T-cell (primary cell): ENCODE measurements at regions of chr14 and their contacts with region 1.

Region 1: DNA sequence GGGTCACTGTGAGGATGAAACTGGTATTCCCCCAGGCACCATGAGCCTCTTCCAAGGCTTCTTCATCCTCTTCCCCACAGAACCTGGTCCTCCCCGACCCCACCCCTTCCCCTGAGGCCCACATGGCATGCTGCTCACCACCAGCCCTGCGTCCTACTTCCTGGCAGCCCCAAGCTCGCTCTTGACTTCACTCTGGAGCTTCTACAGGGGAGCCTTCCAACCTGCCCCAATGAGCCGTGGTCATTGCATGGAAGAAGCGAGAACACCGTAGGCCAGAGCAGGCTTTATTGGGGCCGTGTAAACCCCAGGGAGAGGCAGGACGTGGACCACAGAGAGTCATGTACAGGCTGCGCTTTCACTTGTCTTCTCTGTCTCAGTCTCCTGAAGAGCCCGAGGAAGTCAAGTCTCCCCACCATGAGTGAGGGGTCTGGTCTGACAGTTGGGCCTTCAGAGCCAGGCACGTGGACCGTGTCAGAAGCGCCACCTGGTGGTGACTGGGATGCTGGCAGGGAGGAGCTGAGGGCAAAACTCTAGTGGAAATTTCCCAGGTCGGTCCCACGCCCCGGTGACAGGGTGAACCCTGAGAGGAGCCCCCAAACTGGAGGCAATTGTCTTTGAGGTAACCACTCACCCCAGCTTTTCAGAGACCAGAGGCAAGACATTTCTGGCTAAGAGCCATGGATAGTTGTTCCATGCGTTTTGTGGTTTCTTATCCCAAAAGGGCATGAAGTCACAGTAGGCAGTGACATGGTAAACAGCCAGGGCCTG is 17.5 kb downstream of the RPS6KL1 start:
- DNase-seq: peak; percentile 31 to 87 (median 74)
- ATAC-seq: peak; percentile 69 to 74 (median 72)
- H3K4me3 ChIP-seq: no peak overlapping the region
- H3K4me3 Mint-ChIP-seq: no peak overlapping the region
- H3K27ac ChIP-seq: peak overlapping the region; percentile 8
- H3K27ac Mint-ChIP-seq: peak overlapping the region; percentile 55 to 70
- H3K4me1 ChIP-seq: peaks cover 0 to 17% of the 10 kb centered on the region in 2 experiments
- H3K4me1 Mint-ChIP-seq: peaks cover 0 to 11% (median 11%) of the 10 kb centered on the region in 3 donors
- H3K27me3 ChIP-seq: no peaks in the 10 kb centered on the region
- H3K27me3 Mint-ChIP-seq: no peaks in the 10 kb centered on the region

Region 2: GRCh38 chr14:74414403-74415114 is 491.0 kb before region 1 on chr14:
- CTCF ChIA-PET with region 1: interaction called in 1 of 2 experiments, 12 read pairs
- POLR2A ChIA-PET with region 1: no interaction called
- DNase-seq: no peak
- ATAC-seq: no peak
- H3K4me3 ChIP-seq: no peak overlapping the region
- H3K4me3 Mint-ChIP-seq: no peak overlapping the region
- H3K27ac ChIP-seq: no peak overlapping the region
- H3K27ac Mint-ChIP-seq: no peak overlapping the region
- H3K4me1 ChIP-seq: no peaks in the 10 kb centered on the region
- H3K4me1 Mint-ChIP-seq: no peaks in the 10 kb centered on the region
- H3K27me3 ChIP-seq: peaks cover 6 to 41% of the 10 kb centered on the region in 2 experiments
- H3K27me3 Mint-ChIP-seq: peaks cover 18 to 27% of the 10 kb centered on the region in 2 donors

Region 3: DNA sequence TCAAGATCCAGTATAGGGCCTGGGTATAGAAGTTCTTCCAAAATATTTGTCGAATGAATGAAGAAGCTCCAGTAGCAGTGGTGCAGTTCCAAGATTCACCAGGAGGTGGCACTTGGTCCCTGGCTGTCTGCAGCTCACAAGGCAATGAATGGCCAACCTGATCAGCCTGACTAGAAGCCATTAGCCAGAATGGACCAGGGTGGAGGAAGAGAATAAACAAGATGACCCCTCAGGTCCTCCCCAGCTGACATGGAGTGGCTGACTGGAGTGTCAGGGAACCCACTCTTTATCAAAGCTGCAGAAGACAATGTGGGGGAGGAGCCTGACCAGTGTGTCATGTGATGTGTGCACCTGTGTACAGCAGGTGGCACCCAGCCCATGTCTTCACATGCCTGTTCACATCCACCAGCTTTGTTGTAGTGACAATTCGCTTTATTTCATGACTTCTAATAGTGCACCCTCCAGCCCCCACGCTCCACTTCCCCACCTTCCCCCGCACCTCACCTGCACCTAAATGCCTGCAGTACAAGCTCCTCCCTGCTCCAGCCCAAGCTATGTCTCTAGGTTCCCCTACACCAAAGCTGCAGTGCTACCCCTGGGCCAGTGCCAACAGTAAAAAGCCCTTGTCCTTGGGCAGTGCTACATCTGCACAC is 296.5 kb before region 1 on chr14:
- CTCF ChIA-PET with region 1: interaction called, 3 to 10 read pairs
- POLR2A ChIA-PET with region 1: no interaction called
- DNase-seq: peak; percentile 52 to 92 (median 80)
- ATAC-seq: peak; percentile 36 to 69 (median 44)
- H3K4me3 ChIP-seq: no peak overlapping the region
- H3K4me3 Mint-ChIP-seq: peak overlapping the region in 1 of 3 donors; percentile 14
- H3K27ac ChIP-seq: no peak overlapping the region
- H3K27ac Mint-ChIP-seq: no peak overlapping the region
- H3K4me1 ChIP-seq: peaks cover 0 to 27% of the 10 kb centered on the region in 2 experiments
- H3K4me1 Mint-ChIP-seq: peaks cover 15 to 22% (median 20%) of the 10 kb centered on the region in 3 donors
- H3K27me3 ChIP-seq: peaks cover 0 to 24% of the 10 kb centered on the region in 2 experiments
- H3K27me3 Mint-ChIP-seq: no peaks in the 10 kb centered on the region

Region 4: DNA sequence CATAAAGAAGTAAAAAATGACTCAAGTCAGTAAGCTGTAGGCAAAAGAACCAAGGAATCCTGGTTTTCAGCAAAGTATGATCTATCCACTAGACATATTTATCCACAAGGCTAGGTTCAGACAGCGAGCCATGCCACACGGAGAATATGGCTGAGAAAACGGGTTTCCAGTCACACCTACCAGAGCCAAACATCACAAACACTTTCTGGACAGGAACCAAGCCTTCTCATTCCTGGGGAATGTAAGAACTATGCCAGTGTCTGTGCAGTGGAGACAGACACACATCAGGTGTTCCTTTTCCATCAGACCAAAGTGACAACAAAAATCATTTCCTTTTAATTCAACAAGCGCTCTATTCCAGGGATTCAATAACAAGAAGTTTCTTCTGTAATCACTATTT is 233.8 kb before region 1 on chr14:
- CTCF ChIA-PET with region 1: no interaction called
- POLR2A ChIA-PET with region 1: no interaction called
- DNase-seq: no peak
- ATAC-seq: no peak
- H3K4me3 ChIP-seq: no peak overlapping the region
- H3K4me3 Mint-ChIP-seq: no peak overlapping the region
- H3K27ac ChIP-seq: no peak overlapping the region
- H3K27ac Mint-ChIP-seq: no peak overlapping the region
- H3K4me1 ChIP-seq: no peaks in the 10 kb centered on the region
- H3K4me1 Mint-ChIP-seq: no peaks in the 10 kb centered on the region
- H3K27me3 ChIP-seq: no peaks in the 10 kb centered on the region
- H3K27me3 Mint-ChIP-seq: no peaks in the 10 kb centered on the region

Region 5: GRCh38 chr14:74867673-74868072 is 37.9 kb before region 1 on chr14:
- CTCF ChIA-PET with region 1: interaction called, 12 to 79 read pairs
- POLR2A ChIA-PET with region 1: no interaction called
- DNase-seq: peak in 32 of 35 experiments; percentile 6 to 56 (median 28)
- ATAC-seq: peak; percentile 88 to 97 (median 95)
- H3K4me3 ChIP-seq: no peak overlapping the region
- H3K4me3 Mint-ChIP-seq: peak overlapping the region in 2 of 3 donors; percentile 37 to 48
- H3K27ac ChIP-seq: peak overlapping the region; percentile 46
- H3K27ac Mint-ChIP-seq: peak overlapping the region; percentile 80 to 91
- H3K4me1 ChIP-seq: peaks cover 11 to 13% of the 10 kb centered on the region in 2 experiments
- H3K4me1 Mint-ChIP-seq: peaks cover 21 to 26% (median 23%) of the 10 kb centered on the region in 3 donors
- H3K27me3 ChIP-seq: no peaks in the 10 kb centered on the region
- H3K27me3 Mint-ChIP-seq: no peaks in the 10 kb centered on the region

Region 6: DNA sequence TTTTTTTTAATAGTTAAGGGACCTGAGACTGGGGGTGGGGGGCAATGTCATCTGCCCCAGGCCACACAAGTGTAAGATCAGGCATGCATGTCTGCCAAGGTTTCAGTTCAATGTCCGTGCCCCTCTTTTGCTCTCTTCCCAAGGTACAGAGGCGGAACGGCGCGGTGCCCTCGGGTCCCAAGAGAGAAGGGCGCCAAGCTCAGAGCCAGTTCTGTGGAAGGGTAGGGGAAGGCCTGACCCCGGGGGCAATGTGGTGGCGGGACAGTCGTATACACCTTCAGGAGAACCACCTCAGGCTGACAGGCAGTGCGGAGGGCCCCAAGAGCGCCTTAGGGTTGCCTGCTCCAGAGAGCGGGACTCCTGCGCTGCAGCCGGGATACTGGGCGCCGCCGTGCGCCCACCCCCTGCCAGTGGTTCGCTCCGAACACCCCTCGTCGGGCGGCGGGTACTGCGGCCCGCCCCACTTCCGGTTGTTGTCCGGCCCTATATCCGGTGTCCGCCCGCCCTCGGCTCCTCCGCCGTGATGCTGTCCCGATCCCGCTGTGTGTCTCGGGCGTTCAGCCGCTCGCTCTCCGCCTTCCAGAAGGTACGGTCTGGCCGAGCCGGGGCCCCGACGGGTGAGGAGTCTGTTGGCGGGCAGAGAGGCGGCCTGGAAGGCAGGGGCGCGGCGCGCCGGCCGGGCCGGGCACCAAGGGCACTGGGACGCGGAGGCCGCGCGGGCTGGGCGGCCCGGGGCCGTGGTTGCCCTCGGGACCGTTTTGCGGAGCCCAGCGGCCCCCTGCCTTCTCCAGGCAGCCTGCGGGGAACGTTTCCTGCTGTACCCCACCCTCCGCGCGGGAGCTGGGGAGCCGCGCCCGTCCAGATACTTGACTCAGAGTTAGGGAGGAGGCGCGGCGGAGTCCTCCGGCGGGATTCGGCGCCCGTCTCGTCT is 23.9 kb before region 1 on chr14 and contains the start of gene DLST:
- CTCF ChIA-PET with region 1: interaction called, 4 to 15 read pairs
- POLR2A ChIA-PET with region 1: interaction called in 1 of 2 experiments, 5 read pairs
- DNase-seq: peak; percentile 57 to 90 (median 74)
- ATAC-seq: peak; percentile 83 to 92 (median 90)
- H3K4me3 ChIP-seq: peak within 1 kb of the TSS; percentile 92 to 94
- H3K4me3 Mint-ChIP-seq: peak within 1 kb of the TSS; percentile 93 to 100 (median 97)
- H3K27ac ChIP-seq: peak within 1 kb of the TSS; percentile 89
- H3K27ac Mint-ChIP-seq: peak within 1 kb of the TSS; percentile 98
- H3K4me1 ChIP-seq: peaks cover 15 to 50% of the 10 kb centered on the region in 2 experiments
- H3K4me1 Mint-ChIP-seq: peaks cover 65 to 69% (median 67%) of the 10 kb centered on the region in 3 donors
- H3K27me3 ChIP-seq: no peaks in the 10 kb centered on the region
- H3K27me3 Mint-ChIP-seq: no peaks in the 10 kb centered on the region
- total RNA-seq, gene DLST: 88.3 to 128 (median 102) TPM

Region 7: DNA sequence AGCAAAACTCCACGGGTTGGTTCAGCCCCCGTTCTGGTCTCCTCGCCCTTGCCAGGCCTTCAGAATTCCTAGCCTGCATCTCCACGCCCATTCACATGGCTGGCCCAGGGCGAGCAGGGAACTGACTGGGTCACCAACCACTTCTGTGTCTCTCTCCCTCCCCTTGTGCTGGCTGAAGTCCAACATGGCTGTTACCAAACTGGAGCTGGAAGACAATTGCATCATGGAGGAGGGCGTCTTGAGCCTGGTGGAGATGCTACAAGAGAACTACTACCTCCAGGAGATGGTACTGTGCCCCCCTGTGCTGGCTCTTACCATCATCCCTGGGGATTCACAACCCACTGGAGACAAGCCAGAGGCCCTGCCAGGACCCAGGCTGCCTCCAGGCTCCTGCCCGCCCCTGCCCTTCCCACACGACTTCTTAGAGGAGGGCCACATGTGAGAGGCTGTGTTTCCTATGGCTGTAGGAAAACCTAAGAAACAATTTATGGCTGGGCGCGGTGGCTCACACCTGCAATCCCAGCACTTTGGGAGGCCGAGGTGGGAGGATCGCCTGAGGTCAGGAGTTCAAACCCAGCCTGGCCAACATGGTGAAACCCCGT is 1930.6 kb after region 1 on chr14:
- CTCF ChIA-PET with region 1: no interaction called
- POLR2A ChIA-PET with region 1: interaction called in 1 of 2 experiments, 14 read pairs
- DNase-seq: no peak
- ATAC-seq: no peak
- H3K4me3 ChIP-seq: no peak overlapping the region
- H3K4me3 Mint-ChIP-seq: no peak overlapping the region
- H3K27ac ChIP-seq: no peak overlapping the region
- H3K27ac Mint-ChIP-seq: no peak overlapping the region
- H3K4me1 ChIP-seq: no peaks in the 10 kb centered on the region
- H3K4me1 Mint-ChIP-seq: no peaks in the 10 kb centered on the region
- H3K27me3 ChIP-seq: peaks cover 0 to 17% of the 10 kb centered on the region in 2 experiments
- H3K27me3 Mint-ChIP-seq: peaks cover 7 to 9% of the 10 kb centered on the region in 2 donors